Activated naive CD4-positive, alpha-beta T cell treated with anti-CD3 and anti-CD28 coated beads for 36 hours (primary cell): ENCODE measurements at regions of chr13 and their contacts with region 1.

Region 1: DNA sequence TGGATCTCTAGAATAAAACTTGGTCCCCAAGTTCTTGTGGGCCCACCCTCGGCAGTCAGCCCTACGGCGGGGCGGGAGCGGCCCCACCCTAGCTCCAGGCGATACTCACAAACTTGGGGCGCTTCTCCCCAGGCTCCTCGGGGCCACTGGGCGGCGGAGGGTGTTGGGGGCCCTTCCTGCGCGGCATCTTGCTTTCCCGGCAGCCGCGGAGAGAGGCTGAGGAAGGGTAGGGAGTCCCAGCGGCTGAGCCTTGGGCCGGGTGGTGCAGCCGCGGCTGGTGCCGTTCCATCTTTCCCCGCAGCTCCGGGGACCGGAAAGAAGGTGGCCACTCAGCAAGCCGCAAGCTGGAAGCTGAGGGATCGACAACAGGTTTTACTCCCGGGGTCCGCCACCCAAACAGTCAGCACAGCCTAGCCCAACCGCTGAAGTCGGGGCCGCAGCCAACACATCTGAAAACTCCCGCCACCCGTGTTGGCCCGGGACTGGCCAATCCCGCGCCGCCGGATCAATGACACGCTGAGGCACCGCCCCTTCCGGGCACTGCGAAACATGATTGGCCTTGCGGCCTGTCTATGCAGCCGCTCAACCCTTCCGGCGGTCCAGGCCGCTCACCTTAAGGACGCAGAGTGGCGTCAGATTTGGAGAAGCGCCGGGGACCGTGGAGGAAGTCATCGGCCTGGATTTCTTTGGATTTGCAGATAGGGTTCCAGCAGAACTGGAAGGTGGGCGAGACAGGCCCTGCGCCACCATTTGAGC is at the start of gene DIAPH3:
- DNase-seq: peak; percentile 97
- H3K4me3 Mint-ChIP-seq: peak within 1 kb of the TSS; percentile 91
- H3K27ac Mint-ChIP-seq: peak within 1 kb of the TSS; percentile 88
- H3K4me1 Mint-ChIP-seq: peaks cover 36% of the 10 kb centered on the region
- H3K27me3 Mint-ChIP-seq: no peaks in the 10 kb centered on the region
- total RNA-seq, gene DIAPH3: 24.0 to 24.3 TPM

Region 2: GRCh38 chr13:59970847-59971246 is 192.8 kb before region 1 on chr13:
- CTCF ChIA-PET with region 1: no interaction called
- intact Hi-C with region 1: no loop called
- DNase-seq: no peak
- H3K4me3 Mint-ChIP-seq: no peak overlapping the region
- H3K27ac Mint-ChIP-seq: no peak overlapping the region
- H3K4me1 Mint-ChIP-seq: no peaks in the 10 kb centered on the region
- H3K27me3 Mint-ChIP-seq: no peaks in the 10 kb centered on the region

Region 3: DNA sequence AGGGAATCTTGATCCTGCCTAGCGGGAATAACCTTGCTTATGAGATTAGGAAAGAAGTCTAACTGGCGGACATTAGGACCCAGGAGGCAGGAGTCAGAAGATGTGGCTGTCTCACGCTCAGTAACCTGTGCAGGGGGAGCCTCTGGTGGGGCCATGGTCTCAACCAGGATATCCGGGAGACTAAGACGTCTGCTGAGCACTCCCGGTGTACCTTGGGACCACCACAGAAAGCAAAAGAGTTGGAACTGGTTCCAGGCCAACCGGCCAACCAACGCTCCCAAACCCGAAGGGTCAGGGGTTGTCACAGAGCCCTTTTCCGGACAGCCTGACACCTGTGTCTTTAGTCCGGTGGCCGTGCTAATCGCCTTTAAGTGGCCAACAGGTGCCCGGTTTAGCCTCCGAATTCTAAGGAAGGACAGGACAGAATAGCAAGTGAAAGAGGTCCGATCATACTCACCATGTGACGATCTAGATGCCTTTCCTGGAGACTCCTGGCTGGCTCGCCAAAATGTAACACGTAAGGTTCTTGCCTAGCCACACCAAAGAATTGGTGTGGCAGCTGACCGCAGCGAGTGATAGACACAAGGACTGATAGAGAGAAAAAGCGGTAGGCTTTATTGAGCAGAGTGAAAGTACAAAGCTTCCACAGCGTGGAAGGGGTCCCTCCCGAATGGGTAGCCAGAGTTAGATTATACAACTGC is 104.0 kb after region 1 on chr13:
- CTCF ChIA-PET with region 1: no interaction called
- intact Hi-C with region 1: loop called (anchors 5 kb)
- DNase-seq: peak; percentile 58
- H3K4me3 Mint-ChIP-seq: no peak overlapping the region
- H3K27ac Mint-ChIP-seq: no peak overlapping the region
- H3K4me1 Mint-ChIP-seq: no peaks in the 10 kb centered on the region
- H3K27me3 Mint-ChIP-seq: peaks cover 10% of the 10 kb centered on the region

Region 4: DNA sequence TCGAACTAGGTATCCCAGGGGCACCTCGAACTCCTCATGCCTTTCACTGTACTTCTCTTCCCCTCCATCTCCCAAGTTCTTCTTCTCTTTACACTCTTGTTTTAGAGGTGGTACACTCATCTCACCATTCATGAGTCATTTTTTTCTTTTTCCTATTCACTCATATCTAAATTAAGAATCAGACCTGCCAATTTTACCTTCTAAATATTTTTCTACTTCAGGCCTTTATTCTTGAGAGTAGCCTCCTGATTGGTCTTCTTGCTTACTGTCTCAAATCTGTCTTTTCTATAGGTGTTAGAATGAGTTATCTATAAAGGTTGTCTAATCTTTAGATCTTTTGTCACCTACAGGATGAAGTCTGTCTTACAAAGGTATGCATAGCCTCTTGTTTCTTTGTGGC is 254.1 kb after region 1 on chr13:
- CTCF ChIA-PET with region 1: no interaction called
- intact Hi-C with region 1: loop called (anchors 1 kb)
- DNase-seq: no peak
- H3K4me3 Mint-ChIP-seq: no peak overlapping the region
- H3K27ac Mint-ChIP-seq: no peak overlapping the region
- H3K4me1 Mint-ChIP-seq: peaks cover 20% of the 10 kb centered on the region
- H3K27me3 Mint-ChIP-seq: no peaks in the 10 kb centered on the region